CD8-positive, alpha-beta memory T cell (primary cell): ENCODE measurements at regions of chr14 and their contacts with region 1.

Region 1: DNA sequence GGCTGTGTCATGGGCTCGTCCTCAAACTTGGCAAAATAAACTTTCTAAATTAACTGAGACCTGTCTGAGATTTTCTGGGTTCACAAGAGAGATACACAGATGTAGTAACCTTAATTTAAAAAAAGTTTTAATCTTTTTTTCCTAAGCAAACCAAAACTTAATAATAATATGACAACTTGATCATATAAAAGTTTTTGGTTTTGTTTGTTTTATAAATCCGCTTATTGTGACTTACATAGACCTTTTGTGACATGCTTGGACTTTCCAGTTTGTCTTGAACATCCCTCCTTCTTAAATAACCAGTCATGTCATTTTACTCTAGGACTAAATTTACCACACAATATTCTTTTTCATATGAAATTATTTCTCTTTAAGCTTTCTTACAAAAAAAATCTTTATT is 8.5 kb downstream of the RDH12 start:
- DNase-seq: no peak
- H3K4me3 ChIP-seq: no peak overlapping the region
- H3K4me3 Mint-ChIP-seq: no peak overlapping the region
- H3K27ac ChIP-seq: no peak overlapping the region
- H3K27ac Mint-ChIP-seq: no peak overlapping the region
- H3K4me1 ChIP-seq: no peaks in the 10 kb centered on the region
- H3K4me1 Mint-ChIP-seq: no peaks in the 10 kb centered on the region
- H3K27me3 ChIP-seq: no peaks in the 10 kb centered on the region
- H3K27me3 Mint-ChIP-seq: peaks cover 0 to 3% of the 10 kb centered on the region in 2 donors

Region 2: GRCh38 chr14:67846029-67846610 is 135.9 kb after region 1 on chr14:
- CTCF ChIA-PET with region 1: no interaction called
- POLR2A ChIA-PET with region 1: interaction called, 11 read pairs
- DNase-seq: no peak
- H3K4me3 ChIP-seq: no peak overlapping the region
- H3K4me3 Mint-ChIP-seq: peak overlapping the region in 1 of 7 donors; percentile 5
- H3K27ac ChIP-seq: no peak overlapping the region
- H3K27ac Mint-ChIP-seq: no peak overlapping the region
- H3K4me1 ChIP-seq: no peaks in the 10 kb centered on the region
- H3K4me1 Mint-ChIP-seq: peaks cover 2 to 21% (median 6%) of the 10 kb centered on the region in 3 donors
- H3K27me3 ChIP-seq: no peaks in the 10 kb centered on the region
- H3K27me3 Mint-ChIP-seq: no peaks in the 10 kb centered on the region